ENCODE measurements at regions of chr11 and their contacts with region 1.

Region 1: GRCh38 chr11:3854977-3855807 is at the start of gene STIM1:
- DNase-seq: peak; percentile 45
- H3K4me3 ChIP-seq: peak within 1 kb of the TSS; percentile 85
- CTCF ChIP-seq: peak; percentile 97

Region 2: GRCh38 chr11:3807909-3808860 is 47.0 kb before region 1 on chr11 and contains the start of gene PGAP2:
- CTCF ChIA-PET with region 1: interaction called, 20 read pairs
- POLR2A ChIA-PET with region 1: interaction called, 4 read pairs
- DNase-seq: no peak
- H3K4me3 ChIP-seq: peak within 1 kb of the TSS; percentile 77
- CTCF ChIP-seq: peak; percentile 81

Region 3: GRCh38 chr11:3867209-3868091 is 12.3 kb after region 1 on chr11:
- CTCF ChIA-PET with region 1: interaction called, 106 read pairs
- POLR2A ChIA-PET with region 1: interaction called, 3 read pairs
- DNase-seq: no peak
- H3K4me3 ChIP-seq: no peak overlapping the region
- CTCF ChIP-seq: no peak

Region 4: GRCh38 chr11:3905080-3905953 is 50.1 kb after region 1 on chr11:
- CTCF ChIA-PET with region 1: interaction called, 16 read pairs
- POLR2A ChIA-PET with region 1: no interaction called
- DNase-seq: peak; percentile 38
- H3K4me3 ChIP-seq: no peak overlapping the region
- CTCF ChIP-seq: no peak

Region 5: DNA sequence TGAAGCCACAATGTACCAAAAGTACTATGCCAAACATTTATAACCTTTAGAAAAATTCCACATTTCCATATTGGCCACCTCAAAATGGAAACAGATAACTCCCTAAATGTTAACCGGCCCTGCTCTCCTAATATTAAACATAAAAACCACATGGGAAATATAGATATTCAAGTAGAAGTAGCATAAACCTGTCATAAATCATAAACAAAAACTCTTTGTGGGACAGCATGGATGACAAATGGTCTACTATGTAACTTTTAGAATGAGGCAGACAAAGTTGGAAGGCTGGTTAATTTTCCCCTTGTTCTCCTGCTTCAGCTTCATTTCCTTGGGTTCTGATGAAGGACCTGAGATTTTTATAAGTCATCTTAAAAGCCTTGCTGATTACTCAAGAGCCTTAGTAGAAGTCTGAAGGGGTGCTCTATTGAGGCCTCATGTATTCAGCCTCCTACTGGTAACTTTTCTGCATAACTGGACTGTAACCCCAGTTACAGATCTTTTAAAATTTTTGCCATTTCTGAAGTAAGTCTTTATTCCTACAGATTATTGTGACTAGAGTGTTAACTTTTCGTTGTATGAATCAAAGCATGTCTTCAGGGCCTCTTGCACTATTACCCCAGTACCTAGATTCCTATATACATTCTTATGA is 116.7 kb after region 1 on chr11:
- CTCF ChIA-PET with region 1: interaction called, 21 read pairs
- POLR2A ChIA-PET with region 1: no interaction called
- DNase-seq: no peak
- H3K4me3 ChIP-seq: no peak overlapping the region
- CTCF ChIP-seq: no peak

Region 6: DNA sequence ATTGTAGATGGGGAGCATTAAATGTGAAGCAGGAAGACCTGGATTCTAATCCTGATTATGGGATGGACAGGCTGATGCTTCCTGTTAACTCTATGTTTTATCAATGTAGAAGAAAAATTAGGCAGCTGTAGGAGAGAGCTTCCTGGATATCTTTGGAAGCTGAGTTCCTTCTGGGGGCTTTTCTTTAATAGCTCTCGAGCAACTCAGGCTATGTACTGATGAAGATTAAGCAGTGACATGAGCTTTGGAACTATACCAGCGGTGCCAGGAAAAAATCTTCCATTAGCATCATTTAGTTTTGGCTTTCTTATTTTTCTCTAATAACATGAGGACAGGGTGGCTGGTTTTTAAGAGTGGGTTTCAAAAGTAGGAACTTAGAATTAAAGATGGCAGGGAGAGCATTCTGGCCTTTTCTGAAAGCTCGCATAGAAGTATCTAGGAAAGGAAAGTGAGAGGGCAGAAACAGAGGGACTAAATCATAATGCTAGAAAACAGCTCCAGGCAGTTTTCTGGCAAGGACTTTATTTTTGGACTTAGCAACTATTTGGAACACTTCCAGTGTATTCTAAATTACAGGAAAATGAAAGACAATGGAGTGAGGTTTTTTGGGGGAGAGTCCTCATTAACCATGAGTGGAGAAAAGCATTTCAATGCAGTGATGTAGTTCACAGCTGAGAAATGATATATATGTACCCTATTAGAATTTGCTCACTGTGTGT is 170.2 kb after region 1 on chr11:
- CTCF ChIA-PET with region 1: interaction called, 12 read pairs
- POLR2A ChIA-PET with region 1: interaction called, 3 read pairs
- DNase-seq: no peak
- H3K4me3 ChIP-seq: no peak overlapping the region
- CTCF ChIP-seq: no peak

Region 7: DNA sequence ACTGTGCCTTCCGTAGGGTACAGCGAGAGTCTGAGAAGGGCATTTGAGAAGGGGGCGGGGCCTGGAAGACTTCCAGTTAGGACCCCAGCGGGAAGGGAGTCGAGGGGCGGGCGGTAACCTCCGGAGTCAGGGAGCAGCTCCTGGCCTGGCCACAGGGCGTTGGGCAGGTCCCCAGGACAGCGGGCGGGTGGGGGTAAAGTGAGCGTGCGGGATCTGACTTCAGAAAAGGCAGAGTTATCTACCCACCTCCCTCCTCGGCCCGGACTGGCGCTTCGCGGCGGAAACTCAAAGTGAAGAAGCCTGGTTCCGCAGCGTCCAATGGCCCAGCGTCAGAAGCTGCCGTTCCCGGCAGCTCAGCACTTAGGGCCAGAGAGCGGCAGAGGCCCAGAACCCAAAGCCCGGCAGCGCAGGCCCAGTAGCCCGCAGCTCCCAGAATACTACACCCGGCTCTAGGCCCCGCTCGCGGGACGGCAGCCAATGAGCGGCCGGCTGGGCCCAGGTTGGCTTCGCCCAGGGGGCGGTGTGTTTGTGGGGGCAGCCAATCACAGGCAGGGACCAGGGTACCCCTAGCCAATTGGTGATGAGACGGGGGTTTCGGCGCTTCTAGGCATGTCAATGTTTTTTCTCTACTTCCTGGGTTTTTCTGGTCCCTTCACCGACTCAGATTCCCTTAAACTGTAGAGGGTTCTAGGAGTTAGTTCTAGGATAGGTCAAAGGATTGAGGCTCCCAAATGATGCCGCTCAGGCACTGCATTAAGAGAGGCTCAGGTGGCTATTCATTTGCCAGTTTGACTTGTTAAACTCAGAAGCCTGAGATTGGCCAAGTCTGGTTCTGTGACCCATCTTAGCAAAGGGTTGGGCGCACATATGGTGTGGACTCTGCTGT is 752.8 kb after region 1 on chr11 and contains the start of gene TRIM68:
- CTCF ChIA-PET with region 1: no interaction called
- POLR2A ChIA-PET with region 1: no interaction called
- DNase-seq: peak; percentile 76
- H3K4me3 ChIP-seq: peak within 1 kb of the TSS; percentile 69
- CTCF ChIP-seq: no peak